ENCODE measurements at regions of chr7 and their contacts with region 1.

Region 1: GRCh38 chr7:151754142-151754590 is 122.7 kb downstream of the PRKAG2 start:
- DNase-seq: peak; percentile 91
- H3K4me3 ChIP-seq: no peak overlapping the region
- H3K27me3 ChIP-seq: no peaks in the 10 kb centered on the region
- CTCF ChIP-seq: peak; percentile 100

Region 2: GRCh38 chr7:151570366-151570915 is 183.7 kb before region 1 on chr7:
- CTCF ChIA-PET with region 1: interaction called, 84 read pairs
- POLR2A ChIA-PET with region 1: interaction called, 3 read pairs
- DNase-seq: no peak
- H3K4me3 ChIP-seq: no peak overlapping the region
- H3K27me3 ChIP-seq: no peaks in the 10 kb centered on the region
- CTCF ChIP-seq: peak; percentile 50

Region 3: DNA sequence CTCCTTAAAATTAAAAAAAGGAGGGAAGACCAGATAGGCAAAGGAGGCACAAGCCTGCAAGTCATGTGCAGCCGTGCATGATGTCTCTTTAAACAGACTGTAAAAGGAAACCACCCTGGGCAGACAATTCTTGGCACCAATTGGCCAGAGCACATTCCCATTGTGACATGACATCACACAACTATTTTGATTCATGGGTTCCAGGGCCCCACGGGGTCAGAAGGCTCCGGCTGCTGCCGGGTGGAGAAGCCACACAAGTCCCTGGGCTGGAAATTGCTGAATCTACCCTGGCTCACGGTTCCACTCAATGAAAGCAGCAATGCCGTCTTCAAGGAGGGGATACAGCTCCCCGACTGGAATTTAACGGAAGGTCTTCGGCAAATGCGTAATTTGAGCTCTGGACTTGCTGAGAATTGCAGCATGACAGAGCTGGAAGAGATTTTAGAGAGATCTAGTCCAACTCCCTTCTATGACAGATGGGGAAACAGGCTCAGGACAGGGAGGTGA is 17.7 kb before region 1 on chr7:
- CTCF ChIA-PET with region 1: interaction called, 10 read pairs
- POLR2A ChIA-PET with region 1: no interaction called
- DNase-seq: peak; percentile 85
- H3K4me3 ChIP-seq: peak overlapping the region; percentile 28
- H3K27me3 ChIP-seq: no peaks in the 10 kb centered on the region
- CTCF ChIP-seq: no peak

Region 4: DNA sequence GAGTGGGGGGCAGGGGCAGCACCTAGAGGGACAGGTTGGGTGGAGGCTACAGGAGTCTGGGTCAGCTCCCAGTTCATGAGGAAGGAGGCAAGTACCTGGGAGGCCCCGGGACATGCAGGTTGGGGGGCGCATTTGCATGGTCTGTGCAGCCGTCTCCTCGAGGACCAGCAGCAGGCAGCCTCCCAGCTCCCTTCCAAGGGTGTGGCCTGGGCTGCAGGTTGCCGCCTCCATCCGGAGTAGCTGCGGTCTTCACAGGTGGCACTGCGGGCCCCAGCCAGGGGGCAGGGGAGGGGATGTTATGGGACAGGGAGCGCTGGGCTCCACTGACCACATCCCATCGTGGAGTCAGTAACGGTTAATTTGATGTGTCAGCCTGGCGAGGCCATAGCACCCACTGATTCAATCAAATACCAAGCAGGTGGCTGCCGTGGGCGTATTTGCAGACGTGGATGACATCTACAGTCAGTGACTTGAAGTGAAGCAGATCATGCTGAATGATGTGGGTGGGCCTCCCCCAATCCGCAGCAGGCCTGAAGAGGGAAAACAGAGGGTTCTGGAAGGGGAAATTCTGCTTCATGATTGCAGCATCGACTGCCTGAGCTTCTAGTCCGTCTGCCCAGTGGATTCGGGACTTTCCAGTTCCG is 41.1 kb after region 1 on chr7:
- CTCF ChIA-PET with region 1: no interaction called
- POLR2A ChIA-PET with region 1: no interaction called
- DNase-seq: no peak
- H3K4me3 ChIP-seq: no peak overlapping the region
- H3K27me3 ChIP-seq: no peaks in the 10 kb centered on the region
- CTCF ChIP-seq: no peak

Region 5: GRCh38 chr7:151853896-151854719 is 99.9 kb after region 1 on chr7:
- CTCF ChIA-PET with region 1: no interaction called
- POLR2A ChIA-PET with region 1: no interaction called
- DNase-seq: no peak
- H3K4me3 ChIP-seq: no peak overlapping the region
- H3K27me3 ChIP-seq: no peaks in the 10 kb centered on the region; the same call in 1 of the 2 replicates
- CTCF ChIP-seq: no peak

Measured in BJ (cell line).